Common myeloid progenitor, CD34-positive (primary cell): ENCODE measurements at regions of chr3 and their contacts with region 1.

Region 1: DNA sequence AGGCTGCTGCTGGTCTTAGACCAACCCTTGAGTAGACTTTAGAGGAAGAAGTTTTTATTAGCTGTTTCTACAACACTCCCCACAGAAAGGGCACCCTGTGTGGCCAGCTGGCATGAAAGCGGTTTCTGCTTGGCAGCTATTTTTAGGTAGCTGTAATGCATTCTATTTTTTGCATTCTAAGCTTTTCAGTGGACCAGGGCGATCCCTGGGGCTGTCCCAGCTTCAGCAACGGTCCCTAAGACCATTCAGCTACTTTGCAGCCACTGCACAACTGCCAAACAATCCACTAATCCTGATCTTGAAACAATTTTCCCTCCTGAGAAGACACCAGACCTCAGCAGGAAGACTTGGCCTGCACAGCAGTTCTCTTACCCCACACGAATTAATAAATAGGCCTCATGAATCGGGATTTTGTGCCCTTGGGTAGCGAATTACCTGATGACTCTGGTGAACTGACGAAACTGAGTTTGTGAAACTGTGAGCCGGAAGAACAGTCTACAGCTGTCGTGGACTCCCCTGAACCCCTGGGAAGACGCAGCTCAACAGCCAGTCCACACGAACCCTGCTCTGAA is 14.6 kb upstream of the TFRC start:
- DNase-seq: peak in 2 of 3 donors; percentile 66 to 75
- H3K4me3 ChIP-seq: peak overlapping the region in 1 of 7 experiments; percentile 20
- H3K27ac ChIP-seq: peak overlapping the region; percentile 49 to 51
- H3K4me1 ChIP-seq: peaks cover 15 to 34% (median 26%) of the 10 kb centered on the region in 4 experiments
- H3K27me3 ChIP-seq: no peaks in the 10 kb centered on the region

Region 2: DNA sequence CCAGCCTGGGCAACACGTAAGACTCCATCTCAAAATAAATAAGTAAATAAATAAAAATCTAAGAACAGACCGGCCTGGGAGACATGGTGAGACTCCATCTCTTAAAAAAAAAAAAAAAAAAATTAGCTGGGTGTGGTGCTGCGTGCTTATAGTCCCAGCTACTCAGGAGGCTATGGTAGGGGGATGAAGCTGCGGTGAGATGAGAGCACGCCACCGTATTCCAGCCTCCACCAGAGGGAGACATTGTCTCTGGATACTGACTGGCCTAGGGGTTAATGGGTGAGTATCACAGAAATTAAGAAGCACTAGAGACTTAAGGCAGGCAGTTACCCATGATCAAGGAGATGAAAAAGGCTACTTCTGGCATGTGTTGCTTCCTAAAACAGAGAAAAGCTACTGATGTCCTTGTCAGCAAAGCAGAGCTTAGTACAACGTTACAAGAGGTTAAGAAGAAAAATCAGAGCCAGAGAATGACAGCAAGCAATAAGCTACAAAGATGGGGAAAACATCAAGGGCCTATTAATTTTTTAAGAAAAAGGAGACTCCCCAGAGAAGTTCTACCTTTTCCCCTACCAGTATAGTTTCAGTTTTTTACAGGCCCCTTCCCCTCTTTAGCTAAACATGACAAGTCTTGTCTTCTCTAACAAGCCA is 23.2 kb before region 1 on chr3:
- CTCF ChIA-PET with region 1: interaction called, 20 read pairs
- POLR2A ChIA-PET with region 1: no interaction called
- DNase-seq: peak; percentile 82 to 92 (median 87)
- H3K4me3 ChIP-seq: no peak overlapping the region
- H3K27ac ChIP-seq: no peak overlapping the region
- H3K4me1 ChIP-seq: peaks cover 0 to 8% (median 2%) of the 10 kb centered on the region in 4 experiments
- H3K27me3 ChIP-seq: no peaks in the 10 kb centered on the region

Region 3: GRCh38 chr3:196198771-196199753 is 102.6 kb after region 1 on chr3:
- CTCF ChIA-PET with region 1: interaction called, 34 read pairs
- POLR2A ChIA-PET with region 1: no interaction called
- DNase-seq: no peak
- H3K4me3 ChIP-seq: no peak overlapping the region
- H3K27ac ChIP-seq: no peak overlapping the region
- H3K4me1 ChIP-seq: peaks cover 0 to 39% (median 16%) of the 10 kb centered on the region in 4 experiments
- H3K27me3 ChIP-seq: no peaks in the 10 kb centered on the region